ENCODE measurements at regions of chr7 and their contacts with region 1.

Region 1: DNA sequence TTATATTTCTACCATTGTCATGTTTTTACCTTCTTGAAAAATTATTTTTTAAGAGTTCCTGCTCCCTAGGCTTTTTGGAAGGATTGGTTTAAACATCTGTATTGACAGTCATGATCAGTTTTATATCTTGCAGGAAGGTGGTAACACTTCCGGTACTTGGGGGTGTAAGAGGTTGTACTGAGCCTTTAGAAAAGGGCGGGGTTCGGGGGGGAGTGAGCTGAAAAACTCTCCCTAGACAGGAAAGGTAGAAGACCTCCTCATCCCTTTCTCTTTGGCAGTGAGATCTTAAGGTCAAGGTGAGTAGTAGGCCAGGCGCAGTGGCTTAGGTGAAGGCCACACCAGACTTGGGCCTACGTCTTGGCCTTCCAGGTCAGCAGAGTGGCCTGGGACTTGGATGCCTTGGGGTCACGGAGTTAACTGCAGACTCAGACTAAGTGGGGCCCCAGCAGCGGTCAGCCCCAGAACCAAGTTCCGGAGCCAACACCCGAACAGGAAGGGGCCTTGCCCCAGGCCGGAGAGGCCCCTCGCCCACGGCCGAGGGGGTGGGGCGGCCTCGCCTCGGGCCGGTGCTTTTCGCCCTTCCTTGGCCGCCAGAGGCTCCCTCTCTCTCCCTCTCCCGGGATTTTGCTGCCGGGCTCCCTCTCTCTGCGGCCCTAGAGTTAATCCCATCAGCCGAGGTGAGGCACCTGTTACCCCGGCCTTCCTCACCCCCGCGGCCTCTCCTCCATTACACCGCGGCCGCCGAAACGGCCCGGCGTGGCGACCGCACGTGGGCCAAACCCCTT is at the start of gene PPP1R9A:
- DNase-seq: peak; percentile 40 to 70
- ATAC-seq: peak; percentile 83 to 91 (median 90)
- H3K4me3 ChIP-seq: peak within 1 kb of the TSS; percentile 85
- H3K27ac ChIP-seq: peak within 1 kb of the TSS; percentile 76
- H3K4me1 ChIP-seq: peaks cover 17% of the 10 kb centered on the region
- H3K27me3 ChIP-seq: no peaks in the 10 kb centered on the region
- CTCF ChIP-seq: peak; percentile 37
- total RNA-seq, gene PPP1R9A: 13.5 to 18.6 (median 16.2) TPM

Region 2: GRCh38 chr7:94941844-94942632 is 34.8 kb after region 1 on chr7:
- intact Hi-C with region 1: no loop called
- DNase-seq: no peak
- ATAC-seq: no peak
- H3K4me3 ChIP-seq: no peak overlapping the region
- H3K27ac ChIP-seq: no peak overlapping the region
- H3K4me1 ChIP-seq: no peaks in the 10 kb centered on the region
- H3K27me3 ChIP-seq: no peaks in the 10 kb centered on the region
- CTCF ChIP-seq: no peak

Region 3: DNA sequence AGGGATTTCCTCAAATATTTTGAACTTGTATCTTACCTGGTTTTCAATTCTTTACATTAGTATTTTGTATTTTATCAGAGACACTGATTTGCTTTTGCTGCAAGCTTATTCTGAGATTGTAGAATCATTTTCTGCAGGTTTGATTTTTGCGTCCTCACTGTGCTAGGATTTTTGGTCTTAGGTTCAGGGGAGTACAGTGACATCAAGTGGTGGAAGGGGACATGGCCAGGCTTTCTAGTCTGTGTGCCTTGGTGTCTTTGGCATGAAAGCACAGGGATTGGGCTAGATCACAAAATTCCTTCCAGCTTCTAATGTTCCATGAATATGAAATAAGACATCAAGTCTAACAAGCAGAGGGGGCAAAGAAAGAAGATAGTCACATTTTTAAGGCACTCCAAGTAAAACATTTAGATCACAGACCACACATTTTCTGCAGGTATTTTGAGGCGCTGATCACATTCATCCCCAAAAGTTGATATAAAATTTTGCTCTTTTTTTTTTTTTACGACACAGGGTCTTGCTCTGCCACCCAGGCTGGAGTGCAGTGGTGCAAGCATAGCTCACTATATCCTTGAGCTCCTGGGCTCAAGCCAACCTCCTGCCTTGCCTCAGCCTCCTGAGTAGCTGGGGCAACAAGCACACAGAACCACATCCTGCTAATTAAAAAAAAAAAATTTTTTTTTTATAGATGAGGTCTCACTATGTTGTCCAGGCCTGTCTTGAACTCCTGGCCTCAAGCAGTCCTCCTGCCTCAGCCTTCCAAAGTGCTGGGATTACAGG is 292.8 kb after region 1 on chr7:
- intact Hi-C with region 1: loop called in 1 of 2 experiments (anchors 10 kb)
- DNase-seq: peak in 1 of 2 donors; percentile 19
- ATAC-seq: peak; percentile 73 to 93 (median 78)
- H3K4me3 ChIP-seq: no peak overlapping the region
- H3K27ac ChIP-seq: no peak overlapping the region
- H3K4me1 ChIP-seq: no peaks in the 10 kb centered on the region
- H3K27me3 ChIP-seq: no peaks in the 10 kb centered on the region
- CTCF ChIP-seq: peak; percentile 75

Measured in psoas muscle (tissue), 8 donors.